Activated CD8-positive, alpha-beta T cell treated with anti-CD3 and anti-CD28 coated beads for 36 hours (primary cell): ENCODE measurements at regions of chrX and their contacts with region 1.

Region 1: DNA sequence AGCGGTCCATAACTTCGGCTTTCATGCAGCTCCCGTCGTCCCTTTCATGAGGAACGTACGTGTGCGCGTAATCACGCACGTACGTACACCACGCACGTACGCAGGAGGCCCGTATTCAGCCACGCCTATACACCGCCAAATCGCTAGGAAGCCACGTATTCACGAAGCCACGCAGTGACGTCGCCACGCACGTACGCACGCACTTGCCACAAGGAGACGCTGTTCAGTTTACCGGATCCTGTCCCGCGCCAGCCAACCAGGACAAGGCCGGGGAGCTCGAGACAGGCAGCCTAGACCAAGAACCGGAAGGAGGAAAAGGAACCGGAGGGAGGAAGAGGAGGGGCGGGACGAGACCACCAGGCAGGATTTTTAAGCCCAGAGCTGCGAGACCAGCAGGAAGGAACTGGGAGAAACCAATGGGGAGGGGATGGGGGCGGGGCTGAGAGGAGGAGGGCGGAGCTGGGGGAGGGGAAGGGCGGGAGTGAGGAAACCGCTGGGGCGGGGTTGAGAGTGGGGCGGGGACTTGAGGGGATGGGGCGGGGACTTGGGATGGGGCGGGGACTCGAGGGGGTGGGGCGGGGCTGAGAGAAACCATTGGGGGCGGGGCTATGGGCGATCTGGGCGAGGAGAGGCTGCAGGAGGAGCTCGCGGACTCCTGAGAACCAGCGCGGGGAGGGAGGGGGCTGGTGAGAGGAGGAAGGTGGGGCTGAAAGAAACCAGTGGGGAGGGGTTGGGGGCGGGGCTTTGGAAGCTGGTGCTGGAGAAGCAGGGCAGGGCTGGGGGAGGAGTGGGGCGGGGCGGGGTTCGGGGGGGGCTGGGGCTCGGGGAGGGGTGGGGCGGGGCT is at the start of gene EOLA2:
- DNase-seq: peak; percentile 96
- ATAC-seq: peak; percentile 51
- H3K4me3 Mint-ChIP-seq: peak within 1 kb of the TSS; percentile 83
- H3K27ac Mint-ChIP-seq: peak within 1 kb of the TSS; percentile 97
- H3K4me1 Mint-ChIP-seq: no peaks in the 10 kb centered on the region
- H3K27me3 Mint-ChIP-seq: no peaks in the 10 kb centered on the region
- CTCF ChIP-seq: peak; percentile 16
- total RNA-seq, gene EOLA2: 23.2 to 25.8 TPM

Region 2: DNA sequence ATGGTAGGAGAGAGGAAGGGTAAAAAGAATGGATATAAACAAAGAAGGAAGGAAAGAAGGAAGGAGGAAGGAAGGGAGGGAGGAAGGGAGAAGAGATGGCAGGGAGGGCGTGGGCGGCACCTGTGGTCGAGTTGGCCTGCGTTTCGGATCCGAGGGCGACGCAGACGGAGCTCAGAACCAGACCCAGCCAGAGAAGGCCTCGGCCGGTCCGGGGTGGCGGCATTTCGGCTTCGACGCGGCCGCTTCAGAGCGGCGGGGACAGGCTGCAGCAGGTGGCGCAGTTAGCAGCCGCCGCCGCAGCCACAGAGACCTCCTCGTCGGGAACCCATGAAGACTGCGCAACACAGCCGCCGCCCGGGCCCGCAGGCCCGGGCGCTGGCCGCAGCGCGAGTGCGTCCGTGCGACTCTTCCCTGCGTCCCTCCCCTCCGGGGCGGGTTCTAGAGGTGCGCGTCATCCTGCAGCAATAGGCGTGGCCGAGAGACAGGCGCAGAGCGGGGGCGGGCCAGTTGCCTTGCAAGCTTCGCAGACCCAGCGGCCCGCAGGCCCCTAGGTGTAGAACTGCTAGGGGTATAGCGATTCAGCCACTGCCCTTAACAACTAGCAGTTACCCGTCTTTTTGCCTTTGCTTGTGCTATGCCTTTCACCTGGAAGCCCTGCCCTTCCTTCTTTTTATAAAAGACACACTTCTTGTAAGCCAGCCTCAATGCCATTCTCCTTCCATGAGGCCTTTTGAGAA is 433.6 kb before region 1 on chrX and contains the start of gene IDS:
- CTCF ChIA-PET with region 1: no interaction called
- POLR2A ChIA-PET with region 1: no interaction called
- intact Hi-C with region 1: loop called (anchors 10 kb)
- DNase-seq: peak; percentile 93
- ATAC-seq: peak; percentile 75
- H3K4me3 Mint-ChIP-seq: peak within 1 kb of the TSS; percentile 92
- H3K27ac Mint-ChIP-seq: peak within 1 kb of the TSS; percentile 96
- H3K4me1 Mint-ChIP-seq: peaks cover 34% of the 10 kb centered on the region
- H3K27me3 Mint-ChIP-seq: no peaks in the 10 kb centered on the region
- CTCF ChIP-seq: no peak
- total RNA-seq, gene IDS: 44.8 to 50.6 TPM